Naive thymus-derived CD4-positive, alpha-beta T cell (primary cell): ENCODE measurements at regions of chr2 and their contacts with region 1.

Region 1: DNA sequence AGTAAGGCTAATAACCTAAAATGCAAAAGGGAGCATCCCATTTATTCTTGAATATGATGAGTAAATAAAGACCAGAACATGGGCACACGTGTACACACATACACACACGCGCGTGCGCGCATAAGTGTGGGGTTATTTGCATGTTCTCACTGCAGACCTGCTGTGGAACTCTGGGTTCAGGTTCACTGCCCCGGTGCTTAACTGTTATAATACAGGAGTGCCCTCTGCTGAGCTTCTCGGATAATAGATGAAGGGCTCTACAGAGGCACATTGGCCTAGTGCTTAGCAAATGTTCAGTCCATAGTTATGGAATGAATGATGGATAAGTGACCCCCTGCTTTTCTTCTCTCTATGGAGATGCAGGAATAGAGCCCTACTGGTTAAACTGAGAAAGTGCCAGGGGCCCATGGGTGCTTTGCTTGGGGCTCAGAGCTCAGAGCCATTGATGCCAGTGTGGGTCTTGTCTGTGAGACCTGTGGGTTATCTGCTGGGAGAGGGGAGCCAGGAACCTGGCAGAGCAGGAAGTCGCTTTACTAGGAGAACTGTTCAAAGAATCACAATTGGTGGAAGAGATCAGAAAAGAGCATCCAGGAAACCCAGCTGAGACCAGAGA is 3.6 kb upstream of the ARL4C start:
- DNase-seq: peak; percentile 39 to 83 (median 77)
- ATAC-seq: peak; percentile 68
- H3K4me3 ChIP-seq: peak overlapping the region; percentile 32
- H3K4me3 Mint-ChIP-seq: peak overlapping the region; percentile 44 to 91 (median 73)
- H3K27ac ChIP-seq: peak overlapping the region; percentile 91
- H3K27ac Mint-ChIP-seq: peak overlapping the region; percentile 56 to 98 (median 92)
- H3K4me1 ChIP-seq: peaks cover 24 to 30% of the 10 kb centered on the region in 2 donors
- H3K4me1 Mint-ChIP-seq: peaks cover 17 to 34% (median 31%) of the 10 kb centered on the region in 7 donors
- H3K27me3 ChIP-seq: no peaks in the 10 kb centered on the region
- H3K27me3 Mint-ChIP-seq: peaks cover 0 to 34% (median 0%) of the 10 kb centered on the region in 5 donors

Region 2: DNA sequence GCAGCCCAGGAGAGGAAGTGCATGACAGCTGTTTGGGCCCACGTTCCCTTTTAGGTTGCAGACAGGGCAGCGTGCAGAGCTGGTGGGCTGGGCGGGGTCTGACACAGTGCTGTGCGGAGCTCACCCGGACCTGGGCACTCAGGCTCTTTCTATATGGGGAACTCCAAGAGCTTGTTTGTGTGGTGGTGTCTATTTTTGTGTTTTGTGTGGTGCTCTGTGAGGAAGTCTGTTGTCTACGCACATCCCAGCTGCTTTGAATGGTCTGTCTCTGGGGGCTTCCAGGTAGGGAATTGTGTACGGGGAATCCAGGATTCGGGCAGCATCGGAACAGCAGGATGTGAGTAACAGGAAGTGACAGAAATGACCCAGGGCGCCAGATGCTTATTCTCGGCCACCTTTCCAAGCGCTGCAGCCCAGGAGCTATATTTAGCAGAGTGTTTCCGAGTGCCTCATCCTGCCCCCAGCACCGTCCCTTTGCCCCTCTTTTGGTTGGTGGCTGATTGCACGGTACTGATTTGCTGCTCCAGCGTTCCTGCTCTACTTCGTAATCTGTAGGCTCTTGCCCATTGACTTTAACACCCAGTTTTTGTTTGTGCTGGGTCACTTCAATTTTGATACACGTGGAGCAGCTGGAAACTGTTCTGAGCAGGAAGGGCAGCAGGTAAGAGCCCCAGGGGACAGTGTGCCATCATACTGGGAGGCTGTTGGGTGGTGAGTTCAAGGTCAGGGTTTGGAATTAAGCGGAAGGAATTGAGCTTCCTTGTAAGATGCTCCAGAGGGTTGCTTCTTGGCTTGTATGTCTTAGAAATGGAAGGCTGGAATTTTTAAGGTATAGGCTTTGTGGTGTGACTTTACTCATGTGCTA is 1081.5 kb before region 1 on chr2:
- CTCF ChIA-PET with region 1: no interaction called
- POLR2A ChIA-PET with region 1: no interaction called
- intact Hi-C with region 1: loop called in 1 of 2 experiments (anchors 10 kb)
- DNase-seq: peak in 6 of 9 donors; percentile 40 to 69 (median 50)
- ATAC-seq: peak; percentile 74
- H3K4me3 ChIP-seq: peak overlapping the region; percentile 70
- H3K4me3 Mint-ChIP-seq: peak overlapping the region; percentile 84 to 99 (median 92)
- H3K27ac ChIP-seq: peak overlapping the region; percentile 80
- H3K27ac Mint-ChIP-seq: peak overlapping the region; percentile 86 to 99 (median 97)
- H3K4me1 ChIP-seq: peaks cover 65 to 93% of the 10 kb centered on the region in 2 donors
- H3K4me1 Mint-ChIP-seq: peaks cover 78 to 100% (median 96%) of the 10 kb centered on the region in 7 donors
- H3K27me3 ChIP-seq: no peaks in the 10 kb centered on the region
- H3K27me3 Mint-ChIP-seq: no peaks in the 10 kb centered on the region

Region 3: GRCh38 chr2:233990261-233990798 is 510.2 kb before region 1 on chr2:
- CTCF ChIA-PET with region 1: interaction called, 4 read pairs
- POLR2A ChIA-PET with region 1: interaction called, 4 read pairs
- intact Hi-C with region 1: loop called in 1 of 2 experiments (anchors 5 kb)
- DNase-seq: peak in 8 of 9 donors; percentile 35 to 85 (median 76)
- ATAC-seq: peak; percentile 92
- H3K4me3 ChIP-seq: peak overlapping the region; percentile 21
- H3K4me3 Mint-ChIP-seq: peak overlapping the region; percentile 40 to 80 (median 69)
- H3K27ac ChIP-seq: no peak overlapping the region
- H3K27ac Mint-ChIP-seq: peak overlapping the region; percentile 64 to 93 (median 84)
- H3K4me1 ChIP-seq: peaks cover 31 to 37% of the 10 kb centered on the region in 2 donors
- H3K4me1 Mint-ChIP-seq: peaks cover 33 to 68% (median 55%) of the 10 kb centered on the region in 7 donors
- H3K27me3 ChIP-seq: no peaks in the 10 kb centered on the region
- H3K27me3 Mint-ChIP-seq: peaks cover 0 to 34% (median 0%) of the 10 kb centered on the region in 5 donors

Region 4: DNA sequence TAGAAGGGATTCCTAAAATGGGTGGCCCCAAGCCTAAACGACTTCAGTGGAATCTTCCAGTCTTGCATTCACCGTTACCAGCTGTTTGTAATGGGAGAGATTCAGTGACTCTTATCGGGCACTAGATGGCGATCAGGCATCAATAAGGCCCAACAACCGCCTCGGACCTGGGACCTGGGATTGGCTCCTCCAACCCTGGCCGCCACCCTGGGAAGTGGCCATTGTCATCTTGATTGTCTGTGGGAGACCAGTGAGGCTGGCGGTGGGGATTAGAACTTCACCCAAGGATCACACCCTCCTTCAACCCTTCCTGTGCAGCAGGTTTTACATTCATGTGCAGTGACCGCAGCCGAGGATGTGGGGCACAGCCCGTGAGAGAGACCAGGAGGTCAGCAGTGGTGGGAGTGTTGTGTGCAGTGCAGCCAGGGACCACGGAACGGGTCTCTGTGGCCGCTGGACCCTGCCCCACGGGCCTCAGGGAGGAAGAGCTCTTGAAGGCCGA is 364.7 kb before region 1 on chr2:
- CTCF ChIA-PET with region 1: interaction called, 63 read pairs
- POLR2A ChIA-PET with region 1: interaction called, 8 read pairs
- intact Hi-C with region 1: loop called (anchors 1 kb)
- DNase-seq: peak; percentile 13 to 52 (median 40)
- ATAC-seq: peak; percentile 73
- H3K4me3 ChIP-seq: peak overlapping the region; percentile 2
- H3K4me3 Mint-ChIP-seq: peak overlapping the region in 2 of 10 donors; percentile 9 to 30
- H3K27ac ChIP-seq: no peak overlapping the region
- H3K27ac Mint-ChIP-seq: peak overlapping the region; percentile 31 to 83 (median 56)
- H3K4me1 ChIP-seq: peaks cover 23 to 24% of the 10 kb centered on the region in 2 donors
- H3K4me1 Mint-ChIP-seq: peaks cover 6 to 31% (median 29%) of the 10 kb centered on the region in 7 donors
- H3K27me3 ChIP-seq: no peaks in the 10 kb centered on the region
- H3K27me3 Mint-ChIP-seq: peaks cover 0 to 17% (median 0%) of the 10 kb centered on the region in 5 donors

Region 5: DNA sequence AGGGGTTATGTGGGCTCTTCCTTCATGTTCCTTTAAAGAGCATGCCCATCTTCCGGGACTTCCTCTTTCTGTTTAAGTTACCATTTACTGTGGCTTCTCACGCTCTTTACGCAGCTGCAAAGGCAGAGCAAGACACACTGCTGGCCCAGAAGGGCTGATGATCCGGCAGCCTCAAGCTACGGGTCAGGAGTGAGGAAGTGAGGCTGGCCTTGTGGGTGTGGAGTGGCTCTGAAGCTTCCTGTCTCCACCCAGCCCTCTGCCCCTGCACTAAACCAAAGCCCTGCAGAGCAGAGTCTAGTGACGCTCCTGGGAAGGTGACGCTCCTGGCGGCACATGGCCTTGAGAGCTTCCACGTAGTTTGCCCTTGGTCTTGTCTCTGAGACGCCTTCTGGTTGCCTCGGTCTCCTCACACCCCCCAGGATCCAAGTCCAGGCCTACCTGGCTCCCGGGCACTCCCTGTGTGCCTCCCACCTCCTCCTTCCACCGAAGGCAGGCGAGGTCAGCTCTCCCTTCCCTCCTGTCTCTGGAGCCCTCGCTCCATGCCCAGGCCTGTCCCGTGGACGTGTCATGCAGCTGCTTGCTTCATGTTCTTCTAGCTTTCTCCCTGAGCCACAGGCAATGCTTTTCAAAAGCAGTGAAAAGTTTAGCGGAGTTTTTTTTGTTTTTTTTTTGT is 54.0 kb before region 1 on chr2:
- CTCF ChIA-PET with region 1: interaction called, 18 read pairs
- POLR2A ChIA-PET with region 1: interaction called, 338 read pairs
- intact Hi-C with region 1: no loop called
- DNase-seq: peak; percentile 58 to 89 (median 85)
- ATAC-seq: peak; percentile 92
- H3K4me3 ChIP-seq: peak overlapping the region; percentile 29
- H3K4me3 Mint-ChIP-seq: peak overlapping the region; percentile 71 to 99 (median 86)
- H3K27ac ChIP-seq: peak overlapping the region; percentile 96
- H3K27ac Mint-ChIP-seq: peak overlapping the region; percentile 96 to 100 (median 100)
- H3K4me1 ChIP-seq: peaks cover 57 to 93% of the 10 kb centered on the region in 2 donors
- H3K4me1 Mint-ChIP-seq: peaks cover 60 to 98% (median 89%) of the 10 kb centered on the region in 7 donors
- H3K27me3 ChIP-seq: no peaks in the 10 kb centered on the region
- H3K27me3 Mint-ChIP-seq: no peaks in the 10 kb centered on the region

Region 6: GRCh38 chr2:234488913-234489451 is 11.5 kb before region 1 on chr2:
- CTCF ChIA-PET with region 1: no interaction called
- POLR2A ChIA-PET with region 1: interaction called, 30 read pairs
- intact Hi-C with region 1: loop called (anchors 1 kb)
- DNase-seq: peak in 8 of 9 donors; percentile 64 to 89 (median 82)
- ATAC-seq: peak; percentile 80
- H3K4me3 ChIP-seq: peak overlapping the region; percentile 48
- H3K4me3 Mint-ChIP-seq: peak overlapping the region; percentile 85 to 100 (median 96)
- H3K27ac ChIP-seq: peak overlapping the region; percentile 94
- H3K27ac Mint-ChIP-seq: peak overlapping the region; percentile 91 to 100 (median 98)
- H3K4me1 ChIP-seq: peaks cover 68 to 83% of the 10 kb centered on the region in 2 donors
- H3K4me1 Mint-ChIP-seq: peaks cover 39 to 84% (median 79%) of the 10 kb centered on the region in 7 donors
- H3K27me3 ChIP-seq: no peaks in the 10 kb centered on the region
- H3K27me3 Mint-ChIP-seq: peaks cover 0 to 2% (median 0%) of the 10 kb centered on the region in 5 donors

Region 7: DNA sequence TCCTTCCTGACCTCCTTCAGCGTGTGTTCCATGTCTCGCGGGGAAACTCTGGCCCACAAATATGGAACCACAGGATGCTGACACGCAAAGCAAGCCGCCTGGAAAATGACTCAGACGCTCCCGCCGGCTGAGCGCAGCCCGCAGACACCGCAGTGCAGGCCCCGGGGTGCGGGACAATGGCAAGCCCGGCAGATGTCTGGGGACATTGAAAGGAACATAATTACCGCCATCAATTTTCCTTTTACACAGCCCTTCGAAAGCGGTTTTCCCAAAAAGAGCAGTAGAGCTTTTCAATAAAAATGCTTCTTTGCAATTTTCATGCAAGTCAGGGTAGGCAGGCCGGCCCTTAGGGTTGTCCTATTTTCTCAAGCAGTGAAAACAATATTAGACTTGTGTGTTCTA is 292.1 kb after region 1 on chr2:
- CTCF ChIA-PET with region 1: no interaction called
- POLR2A ChIA-PET with region 1: no interaction called
- intact Hi-C with region 1: no loop called
- DNase-seq: no peak
- ATAC-seq: no peak
- H3K4me3 ChIP-seq: no peak overlapping the region
- H3K4me3 Mint-ChIP-seq: no peak overlapping the region
- H3K27ac ChIP-seq: no peak overlapping the region
- H3K27ac Mint-ChIP-seq: no peak overlapping the region
- H3K4me1 ChIP-seq: no peaks in the 10 kb centered on the region
- H3K4me1 Mint-ChIP-seq: no peaks in the 10 kb centered on the region
- H3K27me3 ChIP-seq: no peaks in the 10 kb centered on the region
- H3K27me3 Mint-ChIP-seq: peaks cover 0 to 40% (median 23%) of the 10 kb centered on the region in 5 donors